Activated CD4-positive, alpha-beta T cell treated with anti-CD3 and anti-CD28 coated beads for 36 hours (primary cell): ENCODE measurements at regions of chr9 and their contacts with region 1.

Region 1: DNA sequence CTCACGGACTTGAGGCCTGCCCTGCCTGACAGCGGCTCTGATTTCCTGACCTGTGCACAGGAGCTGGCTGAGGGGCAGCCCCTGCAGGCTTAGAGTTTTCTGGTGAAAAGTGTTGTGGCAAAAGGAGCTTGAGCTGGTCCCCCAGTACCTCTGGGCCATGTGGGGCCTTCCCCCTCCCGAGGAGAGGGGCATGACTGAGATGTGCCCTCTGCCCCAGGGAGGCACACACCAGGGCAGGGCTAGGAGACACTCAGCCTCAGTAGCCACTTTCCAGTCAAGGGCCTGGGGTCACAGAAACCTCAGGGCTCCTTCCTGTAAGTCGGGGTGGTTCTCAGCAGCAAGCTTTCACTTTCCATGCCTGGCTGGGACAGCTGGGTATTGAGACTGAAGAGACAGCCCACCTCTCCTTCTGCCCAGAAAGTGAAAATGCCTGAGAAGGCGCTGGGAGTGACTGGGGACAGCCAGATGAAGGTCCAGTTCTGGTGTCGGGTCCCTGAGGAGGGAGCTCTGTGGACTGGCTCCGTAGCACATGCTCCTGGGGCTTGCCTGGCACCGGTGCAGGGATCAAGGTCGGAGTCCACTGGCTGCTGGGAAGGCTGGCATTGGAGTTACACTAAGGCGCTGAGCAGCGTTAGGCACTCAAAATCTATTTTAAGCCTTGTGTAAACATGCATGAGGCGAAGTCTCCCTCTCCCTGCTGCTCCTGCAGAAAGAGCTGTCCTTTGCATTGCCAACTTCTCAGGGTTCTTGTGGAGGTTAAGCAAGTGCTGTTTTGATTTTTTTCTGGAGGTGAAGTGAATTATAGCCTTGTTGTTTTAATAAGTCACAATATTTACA is 394.9 kb downstream of the GADD45G start:
- DNase-seq: peak; percentile 84
- ATAC-seq: peak; percentile 91
- H3K4me3 Mint-ChIP-seq: peak overlapping the region; percentile 42
- H3K27ac Mint-ChIP-seq: peak overlapping the region; percentile 86
- H3K4me1 Mint-ChIP-seq: peaks cover 25% of the 10 kb centered on the region
- H3K27me3 Mint-ChIP-seq: no peaks in the 10 kb centered on the region

Region 2: DNA sequence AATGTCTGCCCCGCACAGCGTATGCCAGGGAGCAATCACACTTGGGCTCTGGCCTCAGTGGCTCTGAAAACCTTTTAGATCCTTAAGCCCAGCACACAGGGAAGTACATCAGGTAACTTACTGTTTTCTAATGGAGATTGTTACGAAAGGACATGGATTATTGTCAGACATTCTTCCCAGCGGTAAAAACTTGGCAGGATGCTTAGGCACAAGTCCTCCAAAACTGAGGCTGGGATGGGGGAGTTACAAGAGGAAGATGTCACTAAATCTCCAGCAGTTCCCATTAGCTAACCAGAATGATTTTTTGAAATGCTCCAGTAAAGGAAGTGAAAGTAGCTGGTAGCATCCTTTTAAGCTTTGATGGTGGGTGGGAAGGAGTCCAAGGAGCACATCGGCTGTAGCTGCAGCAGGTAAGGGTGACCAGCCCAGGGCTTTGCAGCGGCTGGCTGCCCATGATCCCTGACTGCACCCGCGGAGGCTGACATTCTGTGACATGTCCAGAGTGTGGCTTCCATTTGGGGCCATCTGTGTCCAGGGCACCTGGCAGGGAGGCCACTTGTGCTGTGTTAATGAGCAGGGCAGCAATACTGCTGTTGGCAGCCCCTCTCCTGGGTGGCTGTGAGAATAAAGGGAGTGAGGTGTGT is 229.1 kb before region 1 on chr9:
- CTCF ChIA-PET with region 1: no interaction called
- POLR2A ChIA-PET with region 1: no interaction called
- intact Hi-C with region 1: no loop called
- DNase-seq: no peak
- ATAC-seq: no peak
- H3K4me3 Mint-ChIP-seq: no peak overlapping the region
- H3K27ac Mint-ChIP-seq: no peak overlapping the region
- H3K4me1 Mint-ChIP-seq: no peaks in the 10 kb centered on the region
- H3K27me3 Mint-ChIP-seq: no peaks in the 10 kb centered on the region

Region 3: DNA sequence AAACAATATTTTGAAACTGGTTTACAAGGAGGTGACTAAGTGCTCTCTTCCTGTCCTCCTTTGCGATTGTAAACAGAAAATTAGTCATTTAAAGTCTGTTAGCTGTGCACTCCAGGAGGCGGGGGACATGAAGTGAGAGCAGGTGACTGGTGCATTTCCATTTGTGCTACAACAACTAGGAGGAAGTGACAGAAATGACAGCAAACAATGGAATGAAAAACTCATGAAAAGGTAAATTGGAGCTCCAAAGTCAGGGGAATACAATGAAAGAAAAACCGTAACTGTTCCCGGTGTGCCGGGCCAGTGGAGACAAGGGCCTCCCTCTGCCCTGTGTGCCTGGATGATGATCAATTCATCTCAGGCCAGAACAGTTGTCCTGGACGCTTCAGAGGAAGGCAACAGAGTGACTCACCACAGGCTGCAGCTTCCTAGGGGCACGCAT is 45.0 kb after region 1 on chr9:
- CTCF ChIA-PET with region 1: no interaction called
- POLR2A ChIA-PET with region 1: no interaction called
- intact Hi-C with region 1: loop called in 1 of 2 experiments (anchors 5 kb)
- DNase-seq: peak; percentile 56
- ATAC-seq: peak; percentile 93
- H3K4me3 Mint-ChIP-seq: no peak overlapping the region
- H3K27ac Mint-ChIP-seq: no peak overlapping the region
- H3K4me1 Mint-ChIP-seq: peaks cover 12% of the 10 kb centered on the region
- H3K27me3 Mint-ChIP-seq: no peaks in the 10 kb centered on the region